ENCODE measurements at regions of chr1 and their contacts with region 1.

Region 1: GRCh38 chr1:43763497-43763973 is 56.2 kb downstream of the ST3GAL3 start:
- DNase-seq: peak; percentile 59
- ATAC-seq: peak; percentile 90
- H3K4me3 Mint-ChIP-seq: no peak overlapping the region
- H3K27ac Mint-ChIP-seq: no peak overlapping the region
- H3K4me1 Mint-ChIP-seq: no peaks in the 10 kb centered on the region
- H3K27me3 Mint-ChIP-seq: no peaks in the 10 kb centered on the region

Region 2: GRCh38 chr1:44049839-44050238 is 286.3 kb after region 1 on chr1:
- CTCF ChIA-PET with region 1: interaction called, 3 read pairs
- POLR2A ChIA-PET with region 1: no interaction called
- intact Hi-C with region 1: loop called in 1 of 2 experiments (anchors 1 kb)
- DNase-seq: no peak
- ATAC-seq: no peak
- H3K4me3 Mint-ChIP-seq: no peak overlapping the region
- H3K27ac Mint-ChIP-seq: no peak overlapping the region
- H3K4me1 Mint-ChIP-seq: peaks cover 21% of the 10 kb centered on the region
- H3K27me3 Mint-ChIP-seq: peaks cover 8% of the 10 kb centered on the region

Measured in activated CD4-positive, alpha-beta T cell treated with anti-CD3 and anti-CD28 coated beads for 36 hours (primary cell).